Activated T-helper 1 cell treated with anti-CD3 and anti-CD28 coated beads, Interleukin-12 subunit alpha, Interleukin-12 subunit beta, Interleukin-2, Interleukin-4 antibody, amounts not matched to agents 30 ng/mL and 10 ng/mL and 1 ng/mL, durations not matched to agents 14 hours and 24 hours and 36 hours (primary cell): ENCODE measurements at regions of chr3 and their contacts with region 1.

Region 1: GRCh38 chr3:5122030-5122740 is at the start of gene ARL8B:
- DNase-seq: peak; percentile 90
- H3K4me3 Mint-ChIP-seq: peak within 1 kb of the TSS; percentile 88
- H3K27ac Mint-ChIP-seq: peak within 1 kb of the TSS; percentile 87
- H3K4me1 Mint-ChIP-seq: peaks cover 40% of the 10 kb centered on the region
- H3K27me3 Mint-ChIP-seq: no peaks in the 10 kb centered on the region
- total RNA-seq, gene ARL8B: 43.4 and 51.0 TPM in 2 replicates

Region 2: DNA sequence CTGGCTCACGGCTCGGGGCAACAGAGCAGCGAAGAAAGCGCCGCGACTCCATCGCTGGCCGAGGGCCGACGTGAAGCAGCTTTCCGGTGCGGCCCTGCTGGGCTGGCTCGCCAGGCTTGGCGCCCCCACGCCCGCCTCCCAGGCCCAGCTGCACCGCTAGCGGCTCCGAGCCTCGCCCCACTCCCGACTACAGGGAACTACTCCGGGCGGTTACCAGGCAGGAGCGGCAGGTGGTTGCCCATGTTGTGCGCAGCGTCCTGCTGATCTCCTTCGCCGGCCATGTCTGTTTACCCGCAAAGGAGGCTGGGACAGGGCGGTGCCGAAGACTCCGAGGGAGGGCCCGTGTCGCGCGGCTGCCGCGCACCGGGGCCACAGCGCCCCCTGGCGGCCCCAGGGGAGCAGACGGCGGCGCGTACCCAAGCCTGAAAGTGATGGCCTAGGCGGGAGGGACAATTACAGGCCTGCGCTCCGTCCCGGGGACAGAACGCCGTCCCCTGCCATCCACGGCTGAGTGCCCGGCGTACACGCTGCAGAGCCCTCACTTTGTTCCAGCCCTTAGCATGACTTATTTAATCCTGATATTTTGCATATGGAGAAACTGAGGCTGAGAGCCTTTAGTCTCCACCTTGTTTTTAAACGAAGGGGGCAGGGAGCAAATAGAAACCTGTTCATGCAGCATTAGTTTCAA is 1942.6 kb before region 1 on chr3 and contains the start of gene CRBN:
- intact Hi-C with region 1: loop called (anchors 5 kb)
- DNase-seq: peak; percentile 86
- H3K4me3 Mint-ChIP-seq: peak within 1 kb of the TSS; percentile 96
- H3K27ac Mint-ChIP-seq: peak within 1 kb of the TSS; percentile 85
- H3K4me1 Mint-ChIP-seq: peaks cover 48% of the 10 kb centered on the region
- H3K27me3 Mint-ChIP-seq: peaks cover 3% of the 10 kb centered on the region
- total RNA-seq, gene CRBN: 36.8 and 42.5 TPM in 2 replicates

Region 3: GRCh38 chr3:4466741-4467521 is 655.3 kb before region 1 on chr3 and contains the start of gene SUMF1:
- intact Hi-C with region 1: loop called (anchors 2 kb)
- DNase-seq: peak; percentile 68
- H3K4me3 Mint-ChIP-seq: peak within 1 kb of the TSS; percentile 95
- H3K27ac Mint-ChIP-seq: peak within 1 kb of the TSS; percentile 91
- H3K4me1 Mint-ChIP-seq: peaks cover 15% of the 10 kb centered on the region
- H3K27me3 Mint-ChIP-seq: peaks cover 2% of the 10 kb centered on the region
- total RNA-seq, gene SUMF1: 6.1 and 7.0 TPM in 2 replicates

Region 4: GRCh38 chr3:4712143-4712542 is 410.0 kb before region 1 on chr3:
- intact Hi-C with region 1: loop called (anchors 5 kb)
- DNase-seq: no peak
- H3K4me3 Mint-ChIP-seq: no peak overlapping the region
- H3K27ac Mint-ChIP-seq: peak overlapping the region; percentile 32
- H3K4me1 Mint-ChIP-seq: peaks cover 61% of the 10 kb centered on the region
- H3K27me3 Mint-ChIP-seq: no peaks in the 10 kb centered on the region

Region 5: DNA sequence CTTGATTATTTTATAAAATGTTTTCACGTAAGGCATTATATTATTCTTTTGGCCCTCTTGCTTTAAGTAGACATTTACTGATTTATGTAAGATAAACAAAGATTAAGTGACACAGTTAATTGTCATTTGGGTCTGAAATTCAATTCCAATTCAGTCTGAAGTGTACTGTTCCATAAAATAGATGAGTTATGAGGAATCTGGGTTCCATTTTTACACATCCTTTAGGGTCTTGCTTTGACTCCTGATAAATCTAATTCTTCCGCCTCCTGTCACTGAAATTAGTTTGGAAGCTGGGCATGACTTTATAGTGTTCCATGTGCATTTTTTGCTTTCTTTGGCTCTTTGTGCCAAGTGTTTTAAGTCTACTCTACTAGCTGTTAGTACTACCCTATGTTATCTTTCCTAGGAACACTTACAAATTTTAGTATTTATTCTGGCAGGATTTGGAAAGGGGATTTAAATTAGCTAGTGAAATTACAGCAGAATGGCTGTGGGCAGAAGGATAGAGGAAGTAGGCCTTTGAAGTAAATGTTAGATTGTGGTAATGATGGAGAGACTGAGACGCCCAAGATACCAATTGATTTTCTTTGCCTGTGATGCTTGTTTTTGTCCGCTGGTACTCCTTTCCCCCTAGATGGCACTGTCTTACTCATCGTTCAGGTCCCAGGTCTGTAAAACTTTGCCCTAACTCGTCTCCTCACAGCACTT is 14.2 kb after region 1 on chr3:
- intact Hi-C with region 1: loop called (anchors 1 kb)
- DNase-seq: peak; percentile 7
- H3K4me3 Mint-ChIP-seq: no peak overlapping the region
- H3K27ac Mint-ChIP-seq: peak overlapping the region; percentile 4
- H3K4me1 Mint-ChIP-seq: peaks cover 39% of the 10 kb centered on the region
- H3K27me3 Mint-ChIP-seq: no peaks in the 10 kb centered on the region

Region 6: DNA sequence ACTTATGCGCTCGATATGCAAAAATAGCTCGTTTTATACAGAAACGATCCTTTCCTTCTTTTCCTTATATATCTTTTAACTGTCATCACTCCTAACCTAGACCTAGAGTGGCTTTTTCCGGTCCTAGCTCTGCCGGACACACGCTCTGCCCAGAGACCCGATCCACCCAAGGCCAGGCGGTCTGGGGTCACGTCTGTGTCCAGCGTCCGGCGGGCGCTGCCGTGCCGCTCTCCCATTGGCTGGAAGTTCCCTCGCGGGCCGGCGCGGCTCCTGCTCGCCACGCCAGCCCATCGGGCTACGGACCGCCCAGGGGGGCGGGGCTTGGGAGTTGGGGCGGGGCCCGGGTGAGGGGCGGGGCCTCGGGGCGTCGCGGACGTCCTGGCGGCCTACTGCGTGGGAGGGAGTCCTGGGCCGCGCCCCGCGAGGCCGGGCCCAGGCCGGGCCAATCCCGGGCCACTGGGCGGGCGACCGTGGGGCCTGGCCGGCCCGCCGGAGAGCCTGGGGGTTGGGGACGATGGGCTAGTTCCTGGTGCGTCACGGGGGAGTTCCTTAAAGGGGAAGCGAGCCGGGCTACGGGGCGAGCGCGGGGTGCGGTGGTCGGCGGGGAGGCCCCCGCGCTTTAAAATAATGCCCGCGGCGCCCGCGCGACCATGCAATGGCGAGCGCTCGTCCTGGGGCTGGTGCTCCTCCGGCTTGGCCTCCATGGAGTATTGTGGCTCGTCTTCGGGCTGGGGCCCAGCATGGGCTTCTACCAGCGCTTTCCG is 65.2 kb after region 1 on chr3 and contains the start of gene EDEM1:
- intact Hi-C with region 1: loop called (anchors 1 kb)
- DNase-seq: peak; percentile 96
- H3K4me3 Mint-ChIP-seq: peak within 1 kb of the TSS; percentile 93
- H3K27ac Mint-ChIP-seq: peak within 1 kb of the TSS; percentile 98
- H3K4me1 Mint-ChIP-seq: peaks cover 39% of the 10 kb centered on the region
- H3K27me3 Mint-ChIP-seq: no peaks in the 10 kb centered on the region
- total RNA-seq, gene EDEM1: 169 and 192 TPM in 2 replicates